ENCODE measurements at regions of chr3 and their contacts with region 1.

Region 1: GRCh38 chr3:194070634-194071409 is 65.1 kb upstream of the HES1 start:
- DNase-seq: peak; percentile 98
- H3K4me3 ChIP-seq: peak overlapping the region in 2 of 3 experiments; percentile 23
- H3K27ac ChIP-seq: peak overlapping the region; percentile 87
- H3K4me1 ChIP-seq: peaks cover 15% of the 10 kb centered on the region
- H3K27me3 ChIP-seq: no peaks in the 10 kb centered on the region
- CTCF ChIP-seq: no peak
- POLR2A ChIP-seq: peak; percentile 45

Region 2: DNA sequence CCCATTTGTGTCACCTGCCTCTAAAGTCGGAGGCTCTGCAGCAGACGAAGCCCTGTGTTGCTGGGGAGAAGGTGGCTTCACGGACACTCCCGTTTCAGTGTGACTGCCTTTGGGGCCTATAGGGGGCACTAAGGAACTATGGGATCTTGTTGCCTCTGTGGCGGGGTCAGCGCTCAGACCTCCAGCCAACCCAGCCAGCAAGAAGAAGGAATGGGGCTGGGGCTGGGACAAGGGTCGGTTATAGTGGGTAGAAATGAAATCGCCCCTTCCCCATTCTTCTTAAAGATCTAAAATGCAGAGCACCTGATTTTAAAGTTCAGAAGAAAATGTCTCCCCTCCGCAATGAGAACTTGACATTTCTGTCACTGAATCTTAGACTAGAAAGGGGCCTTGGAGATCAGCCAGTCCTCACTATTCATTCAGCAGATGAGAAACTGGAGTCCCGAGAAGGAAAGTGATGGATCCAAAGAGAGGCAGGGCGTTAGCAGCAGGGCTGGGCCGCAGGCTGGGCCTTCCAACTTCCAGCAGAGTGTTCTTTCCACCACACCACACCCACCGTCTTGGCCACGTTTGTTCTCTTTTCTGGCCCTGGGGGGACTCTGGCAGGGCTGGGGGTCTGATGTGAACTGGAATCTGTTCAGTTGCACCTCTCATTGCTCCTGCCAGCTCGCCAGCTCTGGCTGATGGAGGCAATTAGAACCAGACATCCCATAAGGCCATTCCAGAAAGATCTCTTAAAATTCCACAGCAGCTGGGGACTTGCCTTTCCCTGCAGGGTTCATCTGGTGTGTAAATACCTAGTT is 282.4 kb before region 1 on chr3:
- CTCF ChIA-PET with region 1: interaction called, 3 read pairs
- POLR2A ChIA-PET with region 1: no interaction called
- dilution Hi-C with region 1: no loop called
- intact Hi-C with region 1: loop called (anchors 2 kb)
- DNase-seq: peak; percentile 76
- H3K4me3 ChIP-seq: no peak overlapping the region
- H3K27ac ChIP-seq: no peak overlapping the region
- H3K4me1 ChIP-seq: peaks cover 5% of the 10 kb centered on the region
- H3K27me3 ChIP-seq: peaks cover 0 to 1% of the 10 kb centered on the region in 2 experiments
- CTCF ChIP-seq: peak; percentile 82 to 88
- POLR2A ChIP-seq: no peak

Region 3: GRCh38 chr3:193872265-193872753 is 198.5 kb before region 1 on chr3:
- CTCF ChIA-PET with region 1: no interaction called
- POLR2A ChIA-PET with region 1: no interaction called
- dilution Hi-C with region 1: no loop called
- intact Hi-C with region 1: loop called (anchors 2 kb)
- DNase-seq: peak; percentile 72
- H3K4me3 ChIP-seq: no peak overlapping the region
- H3K27ac ChIP-seq: peak overlapping the region; percentile 6
- H3K4me1 ChIP-seq: peaks cover 33% of the 10 kb centered on the region
- H3K27me3 ChIP-seq: no peaks in the 10 kb centered on the region
- CTCF ChIP-seq: no peak
- POLR2A ChIP-seq: peak; percentile 30

Region 4: GRCh38 chr3:193971261-193971751 is 99.5 kb before region 1 on chr3:
- CTCF ChIA-PET with region 1: no interaction called
- POLR2A ChIA-PET with region 1: no interaction called
- dilution Hi-C with region 1: no loop called
- intact Hi-C with region 1: loop called (anchors 1 kb)
- DNase-seq: no peak
- H3K4me3 ChIP-seq: no peak overlapping the region
- H3K27ac ChIP-seq: no peak overlapping the region
- H3K4me1 ChIP-seq: peaks cover 20% of the 10 kb centered on the region
- H3K27me3 ChIP-seq: no peaks in the 10 kb centered on the region
- CTCF ChIP-seq: no peak
- POLR2A ChIP-seq: no peak

Region 5: GRCh38 chr3:194043516-194043915 is 27.3 kb before region 1 on chr3:
- CTCF ChIA-PET with region 1: interaction called, 4 read pairs
- POLR2A ChIA-PET with region 1: no interaction called
- dilution Hi-C with region 1: no loop called
- intact Hi-C with region 1: loop called (anchors 1 kb)
- DNase-seq: peak; percentile 77
- H3K4me3 ChIP-seq: no peak overlapping the region
- H3K27ac ChIP-seq: peak overlapping the region; percentile 56
- H3K4me1 ChIP-seq: peaks cover 35% of the 10 kb centered on the region
- H3K27me3 ChIP-seq: no peaks in the 10 kb centered on the region
- CTCF ChIP-seq: no peak
- POLR2A ChIP-seq: no peak

Region 6: DNA sequence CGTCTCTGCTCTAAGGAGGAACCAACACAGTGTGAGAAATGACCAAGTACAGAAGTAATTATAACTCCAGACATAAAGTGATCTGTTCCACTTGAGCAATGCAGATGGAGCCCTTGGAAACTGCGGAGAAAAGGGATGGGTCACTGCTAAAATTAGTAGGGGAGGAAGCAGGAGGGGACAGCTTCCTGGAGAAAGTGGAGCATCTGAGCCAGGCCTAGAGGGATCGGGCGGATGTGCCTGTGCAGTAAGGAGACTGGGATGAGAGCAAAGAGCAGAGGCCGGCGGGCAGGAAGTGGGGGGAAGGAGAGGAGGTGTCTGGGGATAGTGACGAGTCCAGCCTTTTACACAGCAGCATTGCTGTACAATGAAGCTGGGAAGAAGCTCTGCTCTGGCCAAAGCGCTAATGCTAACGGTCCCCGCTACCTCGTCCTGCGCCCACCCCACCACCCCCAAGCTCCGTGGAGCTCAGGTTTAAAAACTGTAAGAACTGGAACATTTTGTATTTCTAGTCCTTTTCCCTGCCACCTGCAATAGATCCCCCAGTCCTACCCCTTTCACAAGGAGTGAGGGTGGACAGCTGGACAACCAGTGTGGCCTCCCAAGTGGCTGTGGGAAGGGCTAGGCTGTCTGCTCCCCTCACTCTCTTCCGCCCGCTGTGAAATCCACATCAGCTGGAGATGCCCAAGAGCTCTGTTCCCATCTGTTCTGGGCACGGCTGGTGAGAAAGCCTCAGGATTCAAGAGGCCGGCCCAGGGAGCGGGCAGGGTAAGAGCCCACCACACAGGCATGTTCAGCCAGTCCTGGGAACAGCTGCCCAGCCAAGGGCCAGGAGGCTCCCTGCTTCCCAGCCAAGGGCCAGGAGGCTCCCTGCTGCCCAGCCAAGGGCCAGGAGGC is 12.2 kb after region 1 on chr3:
- CTCF ChIA-PET with region 1: interaction called, 10 read pairs
- POLR2A ChIA-PET with region 1: no interaction called
- dilution Hi-C with region 1: no loop called
- intact Hi-C with region 1: no loop called
- DNase-seq: no peak
- H3K4me3 ChIP-seq: no peak overlapping the region
- H3K27ac ChIP-seq: no peak overlapping the region
- H3K4me1 ChIP-seq: peaks cover 14% of the 10 kb centered on the region
- H3K27me3 ChIP-seq: no peaks in the 10 kb centered on the region
- CTCF ChIP-seq: no peak
- POLR2A ChIP-seq: no peak

Region 7: DNA sequence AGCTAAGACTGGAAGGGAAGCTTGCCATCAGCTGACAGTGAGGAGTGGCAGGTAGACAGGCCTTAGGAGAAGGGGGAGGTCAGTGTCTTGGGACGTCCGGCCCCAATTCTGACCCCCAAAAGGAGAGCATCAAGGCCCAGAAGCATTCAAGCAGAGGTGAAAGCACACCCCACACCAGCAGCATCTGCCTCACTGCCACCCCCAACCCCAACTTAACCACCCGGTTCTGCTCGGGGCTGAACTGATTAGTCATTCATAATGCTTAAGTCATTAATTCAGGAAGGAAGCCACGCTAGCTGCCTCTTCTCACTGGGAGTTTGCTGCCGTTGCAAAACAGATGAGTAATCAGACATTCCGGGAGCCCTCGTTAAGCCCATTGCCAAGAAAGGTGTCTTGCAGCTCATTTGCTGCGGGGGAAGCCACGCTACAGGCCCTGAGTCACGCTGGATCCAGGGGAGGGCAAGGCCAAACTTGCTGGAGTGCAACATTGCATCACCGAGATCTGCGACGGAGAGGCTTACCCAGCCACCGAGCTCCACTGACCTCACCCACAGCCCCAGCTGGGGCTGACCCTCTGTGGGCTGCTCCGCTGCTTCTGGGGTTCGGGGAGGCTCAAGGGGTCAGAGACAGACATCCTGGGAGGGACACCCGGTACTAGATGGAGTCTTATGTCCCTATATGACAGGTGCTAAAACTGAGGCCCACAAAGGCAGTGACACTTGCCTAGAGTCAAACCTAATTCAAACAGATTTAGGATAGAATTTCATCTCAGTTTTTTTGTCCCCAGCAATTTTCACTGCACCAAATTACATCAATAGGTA is 18.7 kb after region 1 on chr3:
- CTCF ChIA-PET with region 1: interaction called, 9 read pairs
- POLR2A ChIA-PET with region 1: interaction called, 3 read pairs
- dilution Hi-C with region 1: no loop called
- intact Hi-C with region 1: loop called (anchors 1 kb)
- DNase-seq: peak; percentile 99
- H3K4me3 ChIP-seq: no peak overlapping the region
- H3K27ac ChIP-seq: peak overlapping the region; percentile 94
- H3K4me1 ChIP-seq: peaks cover 22% of the 10 kb centered on the region
- H3K27me3 ChIP-seq: no peaks in the 10 kb centered on the region
- CTCF ChIP-seq: no peak
- POLR2A ChIP-seq: no peak

Region 8: GRCh38 chr3:194212845-194213320 is 142.1 kb after region 1 on chr3:
- CTCF ChIA-PET with region 1: no interaction called
- POLR2A ChIA-PET with region 1: no interaction called
- dilution Hi-C with region 1: no loop called
- intact Hi-C with region 1: no loop called
- DNase-seq: no peak
- H3K4me3 ChIP-seq: no peak overlapping the region
- H3K27ac ChIP-seq: no peak overlapping the region
- H3K4me1 ChIP-seq: peaks cover 9% of the 10 kb centered on the region
- H3K27me3 ChIP-seq: no peaks in the 10 kb centered on the region
- CTCF ChIP-seq: no peak
- POLR2A ChIP-seq: no peak

Region 9: DNA sequence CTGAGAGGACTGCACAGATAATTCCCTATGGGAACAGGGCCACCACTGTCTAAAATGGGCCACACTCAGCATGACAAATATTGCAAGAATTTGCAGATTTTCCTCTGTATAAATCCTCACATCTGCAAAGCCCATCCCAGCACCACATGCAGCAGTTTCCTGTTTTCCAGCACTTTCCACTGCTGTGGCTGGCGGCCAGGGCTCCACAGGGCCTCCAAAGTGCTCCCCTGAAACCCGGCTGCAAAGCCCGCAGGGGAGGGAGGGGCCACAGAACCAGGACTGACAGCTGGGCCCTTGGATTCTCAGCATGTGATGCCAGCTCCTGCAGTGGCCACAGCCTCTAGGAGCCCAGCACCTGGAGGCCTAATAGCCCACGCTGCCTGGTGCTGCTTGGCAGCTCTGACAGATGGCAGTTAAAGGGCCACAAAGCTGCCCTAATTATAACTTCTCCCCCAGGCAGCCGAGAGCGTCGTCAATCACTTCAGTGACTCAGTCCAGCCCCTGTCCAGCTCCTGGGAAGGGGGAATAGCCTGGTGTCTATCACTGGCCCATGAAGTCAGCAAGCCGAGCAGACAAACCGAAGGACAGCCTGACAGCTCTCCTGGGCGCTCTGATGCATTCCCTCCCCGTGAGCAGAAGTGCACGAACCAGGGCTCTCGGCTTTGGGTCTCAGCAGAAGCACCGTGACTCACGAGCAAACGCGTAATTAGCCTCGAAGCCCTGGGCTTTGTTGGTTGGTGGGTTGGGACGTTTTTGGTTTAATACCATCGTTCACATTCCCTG is 294.0 kb after region 1 on chr3:
- CTCF ChIA-PET with region 1: no interaction called
- POLR2A ChIA-PET with region 1: no interaction called
- dilution Hi-C with region 1: no loop called
- intact Hi-C with region 1: no loop called
- DNase-seq: peak; percentile 86
- H3K4me3 ChIP-seq: no peak overlapping the region
- H3K27ac ChIP-seq: no peak overlapping the region
- H3K4me1 ChIP-seq: peaks cover 5% of the 10 kb centered on the region
- H3K27me3 ChIP-seq: peaks cover 10 to 22% of the 10 kb centered on the region in 2 experiments
- CTCF ChIP-seq: no peak
- POLR2A ChIP-seq: no peak

Measured in endothelial cell of umbilical vein (primary cell).